ENCODE measurements at regions of chr10 and their contacts with region 1.

Region 1: GRCh38 chr10:101441541-101442455 is 87.8 kb downstream of the BTRC start:
- DNase-seq: peak; percentile 48
- H3K4me3 Mint-ChIP-seq: no peak overlapping the region
- H3K27ac Mint-ChIP-seq: no peak overlapping the region
- H3K4me1 Mint-ChIP-seq: peaks cover 2% of the 10 kb centered on the region
- H3K27me3 Mint-ChIP-seq: no peaks in the 10 kb centered on the region

Region 2: GRCh38 chr10:101161494-101162299 is 280.1 kb before region 1 on chr10:
- CTCF ChIA-PET with region 1: interaction called, 4 read pairs
- intact Hi-C with region 1: loop called (anchors 2 kb)
- DNase-seq: peak; percentile 87
- H3K4me3 Mint-ChIP-seq: peak overlapping the region; percentile 15
- H3K27ac Mint-ChIP-seq: no peak overlapping the region
- H3K4me1 Mint-ChIP-seq: peaks cover 13% of the 10 kb centered on the region
- H3K27me3 Mint-ChIP-seq: peaks cover 53% of the 10 kb centered on the region

Region 3: GRCh38 chr10:101272229-101272868 is 169.4 kb before region 1 on chr10:
- CTCF ChIA-PET with region 1: interaction called, 17 read pairs
- intact Hi-C with region 1: loop called (anchors 1 kb)
- DNase-seq: peak; percentile 73
- H3K4me3 Mint-ChIP-seq: no peak overlapping the region
- H3K27ac Mint-ChIP-seq: no peak overlapping the region
- H3K4me1 Mint-ChIP-seq: peaks cover 2% of the 10 kb centered on the region
- H3K27me3 Mint-ChIP-seq: peaks cover 20% of the 10 kb centered on the region

Region 4: DNA sequence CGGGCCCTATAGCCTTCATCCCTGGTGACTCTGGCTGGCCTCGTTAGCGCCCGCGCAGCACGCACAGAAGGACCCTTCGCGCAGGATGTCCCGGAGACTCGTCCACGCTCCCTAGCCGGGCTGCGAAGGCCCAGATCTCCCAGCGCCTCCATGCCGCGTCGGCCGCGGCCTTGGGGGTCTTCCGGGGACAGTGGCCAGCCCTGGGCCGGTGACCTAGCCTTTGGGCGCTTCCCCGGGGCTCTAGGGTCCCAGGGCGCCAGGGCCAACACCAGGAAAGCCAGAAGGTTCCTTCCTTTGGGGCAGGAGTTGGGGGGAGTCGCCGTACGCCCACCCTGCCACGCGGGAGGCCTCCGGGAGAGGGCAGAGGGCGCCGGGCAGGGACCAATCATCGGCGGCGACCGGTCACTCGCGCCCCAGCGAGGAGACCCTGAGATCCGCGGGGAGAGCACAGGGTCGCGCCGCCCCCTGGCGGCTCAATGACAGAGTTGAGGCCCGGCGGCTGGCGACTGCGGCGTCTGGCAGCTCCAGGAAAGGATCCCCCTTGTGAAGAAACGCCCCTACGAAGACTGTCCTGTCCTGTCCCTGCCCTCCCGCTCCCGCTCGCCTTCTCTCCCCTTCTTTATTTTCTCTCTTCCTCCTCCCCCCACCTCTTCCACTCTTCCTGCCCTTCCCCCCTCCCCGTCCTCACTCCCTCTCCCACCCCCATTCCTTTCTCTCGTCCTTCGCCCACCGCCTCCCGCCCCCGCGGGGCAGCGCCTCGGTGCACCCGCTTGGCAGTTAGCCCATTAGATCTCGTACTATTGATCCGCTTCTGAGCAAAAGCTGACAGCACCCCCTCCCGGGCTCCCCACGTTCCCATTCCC is 150.2 kb before region 1 on chr10:
- CTCF ChIA-PET with region 1: interaction called, 10 read pairs
- intact Hi-C with region 1: no loop called
- DNase-seq: peak; percentile 55
- H3K4me3 Mint-ChIP-seq: peak overlapping the region; percentile 69
- H3K27ac Mint-ChIP-seq: no peak overlapping the region
- H3K4me1 Mint-ChIP-seq: peaks cover 8% of the 10 kb centered on the region
- H3K27me3 Mint-ChIP-seq: peaks cover 58% of the 10 kb centered on the region

Region 5: GRCh38 chr10:101297901-101298486 is 143.8 kb before region 1 on chr10:
- CTCF ChIA-PET with region 1: interaction called, 27 read pairs
- intact Hi-C with region 1: loop called (anchors 1 kb)
- DNase-seq: peak; percentile 89
- H3K4me3 Mint-ChIP-seq: no peak overlapping the region
- H3K27ac Mint-ChIP-seq: no peak overlapping the region
- H3K4me1 Mint-ChIP-seq: peaks cover 1% of the 10 kb centered on the region
- H3K27me3 Mint-ChIP-seq: peaks cover 35% of the 10 kb centered on the region

Region 6: DNA sequence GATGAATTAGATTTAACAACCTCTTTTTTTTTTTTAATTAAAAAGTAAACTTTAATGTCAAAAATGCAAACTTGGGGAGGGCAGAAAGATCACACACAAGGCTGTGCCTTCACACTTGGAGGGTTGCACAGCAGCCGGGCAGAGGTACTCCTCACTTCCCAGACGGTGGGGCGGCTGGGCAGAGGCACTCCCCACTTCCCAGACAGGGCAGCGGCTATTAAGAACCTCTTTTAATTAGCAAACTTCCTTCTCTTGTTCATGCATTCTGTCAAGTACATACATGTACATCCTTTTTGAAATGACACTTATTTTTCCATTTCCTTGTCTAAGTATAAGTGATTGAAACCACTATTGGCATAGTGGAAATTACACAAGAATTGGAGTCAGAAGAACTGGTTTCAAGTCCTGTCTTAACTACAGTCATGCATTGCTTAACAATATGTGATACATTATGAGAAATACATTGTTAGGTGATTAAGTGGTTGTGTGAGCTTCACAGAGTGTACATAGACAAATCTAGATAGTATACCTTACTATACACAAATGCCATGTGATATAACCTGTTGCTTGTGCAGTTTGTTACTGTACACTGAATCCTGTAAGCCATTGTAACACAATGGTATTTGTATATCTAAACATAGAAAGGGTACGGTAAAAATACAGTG is 61.3 kb before region 1 on chr10:
- CTCF ChIA-PET with region 1: no interaction called
- intact Hi-C with region 1: no loop called
- DNase-seq: no peak
- H3K4me3 Mint-ChIP-seq: no peak overlapping the region
- H3K27ac Mint-ChIP-seq: no peak overlapping the region
- H3K4me1 Mint-ChIP-seq: peaks cover 32% of the 10 kb centered on the region
- H3K27me3 Mint-ChIP-seq: no peaks in the 10 kb centered on the region

Region 7: DNA sequence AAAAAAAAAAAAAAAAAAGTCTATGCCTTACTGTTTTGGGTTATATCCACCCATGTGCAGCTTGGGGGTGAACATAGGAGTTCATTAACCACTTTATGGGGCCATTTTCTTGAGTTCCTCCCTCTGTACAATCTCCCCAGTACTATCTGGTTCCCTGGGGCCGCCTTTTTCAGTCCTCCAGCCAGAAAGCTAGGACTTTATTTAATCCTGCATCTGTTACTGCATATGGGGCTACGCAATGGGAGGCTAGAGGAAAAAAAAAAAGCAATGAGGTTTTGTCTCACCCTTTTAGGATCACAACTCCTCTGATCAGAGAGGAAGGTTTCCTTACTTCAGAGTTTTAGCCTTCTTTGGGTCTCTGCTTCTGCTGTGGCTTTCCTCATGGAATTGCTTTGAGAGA is 36.8 kb before region 1 on chr10:
- CTCF ChIA-PET with region 1: no interaction called
- intact Hi-C with region 1: no loop called
- DNase-seq: no peak
- H3K4me3 Mint-ChIP-seq: no peak overlapping the region
- H3K27ac Mint-ChIP-seq: no peak overlapping the region
- H3K4me1 Mint-ChIP-seq: no peaks in the 10 kb centered on the region
- H3K27me3 Mint-ChIP-seq: no peaks in the 10 kb centered on the region

Region 8: GRCh38 chr10:101453791-101454718 is 12.3 kb after region 1 on chr10:
- CTCF ChIA-PET with region 1: interaction called, 16 read pairs
- intact Hi-C with region 1: no loop called
- DNase-seq: no peak
- H3K4me3 Mint-ChIP-seq: no peak overlapping the region
- H3K27ac Mint-ChIP-seq: no peak overlapping the region
- H3K4me1 Mint-ChIP-seq: peaks cover 22% of the 10 kb centered on the region
- H3K27me3 Mint-ChIP-seq: no peaks in the 10 kb centered on the region

Measured in activated naive CD4-positive, alpha-beta T cell treated with anti-CD3 and anti-CD28 coated beads for 36 hours (primary cell).